ENCODE measurements at regions of chrX and their contacts with region 1.

Region 1: GRCh38 chrX:71541210-71542022 is 8.5 kb downstream of the OGT start:
- DNase-seq: peak; percentile 64
- ATAC-seq: peak; percentile 76
- H3K4me3 ChIP-seq: no peak overlapping the region
- H3K4me3 Mint-ChIP-seq: peak overlapping the region; percentile 64
- H3K27ac ChIP-seq: peak overlapping the region; percentile 60 to 64
- H3K27ac Mint-ChIP-seq: peak overlapping the region; percentile 84
- H3K4me1 ChIP-seq: peaks cover 45 to 50% of the 10 kb centered on the region in 2 donors
- H3K4me1 Mint-ChIP-seq: peaks cover 51% of the 10 kb centered on the region
- H3K27me3 ChIP-seq: no peaks in the 10 kb centered on the region
- H3K27me3 Mint-ChIP-seq: no peaks in the 10 kb centered on the region
- CTCF ChIP-seq: no peak

Region 2: GRCh38 chrX:71454222-71454621 is 87.2 kb before region 1 on chrX:
- CTCF ChIA-PET with region 1: no interaction called
- POLR2A ChIA-PET with region 1: no interaction called
- intact Hi-C with region 1: loop called (anchors 10 kb)
- DNase-seq: no peak
- ATAC-seq: no peak
- H3K4me3 ChIP-seq: no peak overlapping the region
- H3K4me3 Mint-ChIP-seq: no peak overlapping the region
- H3K27ac ChIP-seq: no peak overlapping the region
- H3K27ac Mint-ChIP-seq: no peak overlapping the region
- H3K4me1 ChIP-seq: no peaks in the 10 kb centered on the region
- H3K4me1 Mint-ChIP-seq: no peaks in the 10 kb centered on the region
- H3K27me3 ChIP-seq: no peaks in the 10 kb centered on the region
- H3K27me3 Mint-ChIP-seq: no peaks in the 10 kb centered on the region
- CTCF ChIP-seq: no peak

Region 3: GRCh38 chrX:71606536-71607216 is 65.3 kb after region 1 on chrX:
- CTCF ChIA-PET with region 1: no interaction called
- POLR2A ChIA-PET with region 1: no interaction called
- intact Hi-C with region 1: no loop called
- DNase-seq: no peak
- ATAC-seq: no peak
- H3K4me3 ChIP-seq: no peak overlapping the region
- H3K4me3 Mint-ChIP-seq: no peak overlapping the region
- H3K27ac ChIP-seq: peak overlapping the region in 1 of 2 donors; percentile 13
- H3K27ac Mint-ChIP-seq: peak overlapping the region; percentile 46
- H3K4me1 ChIP-seq: peaks cover 15 to 19% of the 10 kb centered on the region in 2 donors
- H3K4me1 Mint-ChIP-seq: peaks cover 23% of the 10 kb centered on the region
- H3K27me3 ChIP-seq: no peaks in the 10 kb centered on the region
- H3K27me3 Mint-ChIP-seq: no peaks in the 10 kb centered on the region
- CTCF ChIP-seq: no peak

Measured in B cell (primary cell).